Activated CD4-positive, alpha-beta memory T cell treated with anti-CD3 and anti-CD28 coated beads, Interleukin-2, amount 10 ng/mL, durations not matched to agents 7 days and 5 days (primary cell): ENCODE measurements at regions of chr12 and their contacts with region 1.

Region 1: DNA sequence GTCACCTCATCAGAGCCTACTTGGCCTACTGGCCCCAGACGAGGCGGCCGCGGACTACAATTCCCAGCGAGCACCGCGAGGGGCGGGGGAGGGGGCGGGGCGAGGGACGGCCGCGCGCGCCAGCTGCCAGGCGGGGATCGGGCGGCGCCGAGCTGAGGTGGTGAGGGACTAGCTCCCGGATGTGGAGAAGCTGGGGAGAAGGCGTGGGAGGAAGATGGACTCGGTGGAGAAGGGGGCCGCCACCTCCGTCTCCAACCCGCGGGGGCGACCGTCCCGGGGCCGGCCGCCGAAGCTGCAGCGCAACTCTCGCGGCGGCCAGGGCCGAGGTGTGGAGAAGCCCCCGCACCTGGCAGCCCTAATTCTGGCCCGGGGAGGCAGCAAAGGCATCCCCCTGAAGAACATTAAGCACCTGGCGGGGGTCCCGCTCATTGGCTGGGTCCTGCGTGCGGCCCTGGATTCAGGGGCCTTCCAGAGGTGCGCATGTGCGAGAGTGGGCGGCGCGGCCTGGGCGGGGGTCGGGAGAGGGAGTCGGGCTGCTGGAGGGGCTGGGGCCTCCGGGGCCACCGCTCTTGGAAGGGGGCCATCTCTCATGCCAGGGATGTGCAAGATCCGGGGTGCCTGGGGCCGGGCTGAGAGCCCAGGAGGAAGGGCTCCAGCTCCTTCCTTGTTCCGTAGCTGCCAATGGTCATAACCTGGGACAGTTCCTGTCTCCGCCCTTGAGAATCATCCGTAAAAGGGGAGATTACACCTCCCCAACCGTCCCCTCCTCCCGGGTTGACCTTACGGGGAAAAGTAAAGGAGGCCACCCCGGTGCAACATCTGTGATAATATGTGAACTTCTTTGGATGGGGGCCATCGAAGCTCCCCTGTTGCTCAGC is at the start of gene CMAS:
- DNase-seq: peak; percentile 84
- H3K4me3 Mint-ChIP-seq: peak within 1 kb of the TSS; percentile 97
- H3K27ac Mint-ChIP-seq: peak within 1 kb of the TSS; percentile 79
- H3K4me1 Mint-ChIP-seq: peaks cover 31% of the 10 kb centered on the region
- H3K27me3 Mint-ChIP-seq: no peaks in the 10 kb centered on the region
- total RNA-seq, gene CMAS: 37.5 to 39.3 TPM

Region 2: DNA sequence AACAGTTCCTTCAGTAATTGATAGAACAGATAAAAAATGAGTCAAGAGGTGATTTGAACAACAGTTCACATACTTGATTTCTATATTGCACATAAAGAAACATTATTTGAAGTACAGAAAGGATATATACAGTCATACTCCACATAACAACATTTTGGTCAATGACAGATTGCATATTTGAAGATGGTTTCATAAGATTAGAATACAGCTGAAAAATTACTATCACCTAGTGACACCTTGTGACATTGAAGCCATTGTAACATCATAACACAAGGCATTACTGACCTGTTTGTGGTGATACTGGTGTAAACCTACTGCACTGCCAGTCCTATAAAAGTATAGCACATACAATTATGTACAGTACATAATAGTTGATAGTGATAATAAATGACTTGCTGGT is 62.0 kb before region 1 on chr12:
- CTCF ChIA-PET with region 1: no interaction called
- POLR2A ChIA-PET with region 1: no interaction called
- DNase-seq: no peak
- H3K4me3 Mint-ChIP-seq: no peak overlapping the region
- H3K27ac Mint-ChIP-seq: no peak overlapping the region
- H3K4me1 Mint-ChIP-seq: no peaks in the 10 kb centered on the region
- H3K27me3 Mint-ChIP-seq: peaks cover 9% of the 10 kb centered on the region

Region 3: GRCh38 chr12:22029491-22029890 is 16.8 kb before region 1 on chr12:
- CTCF ChIA-PET with region 1: no interaction called
- POLR2A ChIA-PET with region 1: no interaction called
- DNase-seq: no peak
- H3K4me3 Mint-ChIP-seq: no peak overlapping the region
- H3K27ac Mint-ChIP-seq: no peak overlapping the region
- H3K4me1 Mint-ChIP-seq: peaks cover 2% of the 10 kb centered on the region
- H3K27me3 Mint-ChIP-seq: peaks cover 5% of the 10 kb centered on the region

Region 4: DNA sequence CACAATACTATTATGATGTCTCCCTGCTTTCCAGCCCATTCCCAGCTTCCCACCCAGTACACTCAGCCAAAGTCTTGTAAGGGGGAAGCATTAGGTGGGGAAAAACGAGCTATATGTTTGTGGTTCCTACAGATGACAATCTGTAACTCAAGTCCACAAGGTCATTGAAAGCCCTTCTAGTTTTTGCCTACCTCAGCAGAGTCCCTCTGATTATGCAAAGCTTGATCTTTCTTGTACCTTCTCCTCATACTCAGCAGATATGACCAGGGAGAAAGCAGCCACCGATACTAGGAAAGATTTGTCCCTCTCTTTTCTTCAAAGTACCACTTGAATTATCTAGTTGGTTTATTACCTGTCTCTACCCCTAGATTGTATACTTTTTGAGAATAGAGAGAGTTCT is 10.3 kb after region 1 on chr12:
- CTCF ChIA-PET with region 1: interaction called, 3 read pairs
- POLR2A ChIA-PET with region 1: interaction called, 11 read pairs
- DNase-seq: no peak
- H3K4me3 Mint-ChIP-seq: no peak overlapping the region
- H3K27ac Mint-ChIP-seq: no peak overlapping the region
- H3K4me1 Mint-ChIP-seq: no peaks in the 10 kb centered on the region
- H3K27me3 Mint-ChIP-seq: no peaks in the 10 kb centered on the region